CD8-positive, alpha-beta T cell (primary cell): ENCODE measurements at regions of chr17 and their contacts with region 1.

Region 1: DNA sequence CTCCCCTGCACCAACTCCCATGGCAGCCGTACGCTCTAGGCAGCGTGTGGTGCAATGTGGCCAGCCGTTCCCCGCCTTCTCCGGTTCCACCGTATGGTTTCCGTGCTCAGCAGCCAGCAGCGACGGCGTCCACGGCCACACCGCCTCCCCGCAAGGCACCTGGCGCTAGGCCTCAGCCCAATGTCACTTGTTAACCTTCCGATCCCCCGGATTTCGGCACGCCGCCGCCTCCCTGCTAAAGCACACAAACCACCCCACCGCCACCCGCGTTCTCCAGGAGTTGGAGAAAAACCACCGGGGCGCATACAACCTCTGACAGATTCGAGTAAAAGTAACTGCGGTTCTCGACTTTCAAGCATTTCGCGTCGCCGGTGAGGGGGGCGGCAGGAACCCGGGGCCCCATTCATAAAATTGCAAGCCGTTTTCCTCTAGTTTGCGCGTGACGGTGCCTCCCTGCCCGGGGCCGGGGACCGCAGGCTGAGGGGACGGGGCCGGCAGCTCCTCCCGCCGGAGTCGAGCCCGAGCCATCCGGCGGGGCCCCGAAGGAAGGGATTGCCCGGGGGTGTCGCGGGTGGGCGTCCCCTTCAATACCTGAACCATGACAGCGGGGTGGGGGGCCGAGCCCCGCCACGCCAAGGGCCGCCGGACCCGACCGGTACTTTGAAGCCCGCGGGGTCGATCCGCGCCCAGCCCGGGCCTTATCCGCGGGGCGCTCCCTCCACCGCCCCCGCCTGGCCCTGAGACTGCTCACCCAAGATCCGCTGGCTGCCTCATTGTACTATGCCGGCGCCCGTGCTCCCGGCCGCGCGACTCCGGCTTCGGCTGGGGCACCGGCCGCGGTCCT is at the start of gene TEX2:
- DNase-seq: peak; percentile 39 to 87 (median 67)
- ATAC-seq: peak; percentile 32
- H3K4me3 ChIP-seq: peak within 1 kb of the TSS; percentile 64 to 82
- H3K4me3 Mint-ChIP-seq: peak within 1 kb of the TSS; percentile 89
- H3K27ac ChIP-seq: peak within 1 kb of the TSS; percentile 67 to 74
- H3K27ac Mint-ChIP-seq: peak within 1 kb of the TSS; percentile 93
- H3K4me1 ChIP-seq: peaks cover 21% of the 10 kb centered on the region
- H3K4me1 Mint-ChIP-seq: peaks cover 37% of the 10 kb centered on the region
- H3K27me3 ChIP-seq: no peaks in the 10 kb centered on the region
- H3K27me3 Mint-ChIP-seq: no peaks in the 10 kb centered on the region
- CTCF ChIP-seq: no peak
- total RNA-seq, gene TEX2: 4.8 to 5.6 TPM

Region 2: DNA sequence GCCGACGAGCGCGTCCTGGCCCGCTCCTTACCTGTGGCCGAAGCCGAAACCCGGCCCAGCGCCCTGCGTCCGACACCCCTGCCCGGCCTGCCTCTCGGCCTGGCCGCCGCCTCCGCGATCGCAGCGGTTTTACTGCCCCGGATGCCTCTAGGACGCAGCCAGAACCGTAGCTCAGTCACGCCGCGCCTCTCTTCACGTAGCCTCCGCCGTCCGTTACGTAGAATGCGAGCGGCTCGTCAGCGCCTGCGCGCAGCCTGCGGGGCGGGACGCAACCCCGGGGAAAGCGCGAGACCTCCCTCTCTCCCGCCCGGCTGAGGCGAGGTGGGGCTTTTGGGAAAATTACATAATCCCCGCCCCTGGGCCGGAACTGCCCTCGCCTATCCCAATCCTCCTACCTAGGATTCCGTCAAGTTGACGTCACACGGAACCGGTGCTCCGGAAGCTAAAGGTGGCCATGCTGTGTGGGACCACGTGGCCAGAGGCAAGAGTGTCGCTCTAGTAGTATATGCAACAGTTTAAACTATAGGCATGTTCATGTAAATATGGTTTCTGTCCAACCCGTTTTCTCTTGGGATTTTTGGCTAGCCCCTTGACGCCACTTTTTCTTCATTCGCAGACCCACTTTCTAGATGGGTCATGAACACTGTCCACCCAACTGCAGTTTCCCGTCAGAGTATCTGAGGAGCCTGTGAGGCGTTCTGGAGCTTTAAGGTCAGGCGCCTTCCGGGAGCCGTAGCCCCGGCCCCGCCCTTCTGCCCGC is 489.1 kb before region 1 on chr17 and contains the start of gene CCDC47:
- CTCF ChIA-PET with region 1: no interaction called
- POLR2A ChIA-PET with region 1: no interaction called
- intact Hi-C with region 1: loop called in 1 of 2 experiments (anchors 2 kb)
- DNase-seq: peak; percentile 95 to 100 (median 97)
- ATAC-seq: peak; percentile 79
- H3K4me3 ChIP-seq: peak within 1 kb of the TSS; percentile 84 to 95
- H3K4me3 Mint-ChIP-seq: peak within 1 kb of the TSS; percentile 97
- H3K27ac ChIP-seq: peak within 1 kb of the TSS; percentile 86 to 97
- H3K27ac Mint-ChIP-seq: peak within 1 kb of the TSS; percentile 98
- H3K4me1 ChIP-seq: peaks cover 41% of the 10 kb centered on the region
- H3K4me1 Mint-ChIP-seq: peaks cover 60% of the 10 kb centered on the region
- H3K27me3 ChIP-seq: no peaks in the 10 kb centered on the region
- H3K27me3 Mint-ChIP-seq: no peaks in the 10 kb centered on the region
- CTCF ChIP-seq: no peak
- total RNA-seq, gene CCDC47: 33.1 to 34.6 TPM

Region 3: DNA sequence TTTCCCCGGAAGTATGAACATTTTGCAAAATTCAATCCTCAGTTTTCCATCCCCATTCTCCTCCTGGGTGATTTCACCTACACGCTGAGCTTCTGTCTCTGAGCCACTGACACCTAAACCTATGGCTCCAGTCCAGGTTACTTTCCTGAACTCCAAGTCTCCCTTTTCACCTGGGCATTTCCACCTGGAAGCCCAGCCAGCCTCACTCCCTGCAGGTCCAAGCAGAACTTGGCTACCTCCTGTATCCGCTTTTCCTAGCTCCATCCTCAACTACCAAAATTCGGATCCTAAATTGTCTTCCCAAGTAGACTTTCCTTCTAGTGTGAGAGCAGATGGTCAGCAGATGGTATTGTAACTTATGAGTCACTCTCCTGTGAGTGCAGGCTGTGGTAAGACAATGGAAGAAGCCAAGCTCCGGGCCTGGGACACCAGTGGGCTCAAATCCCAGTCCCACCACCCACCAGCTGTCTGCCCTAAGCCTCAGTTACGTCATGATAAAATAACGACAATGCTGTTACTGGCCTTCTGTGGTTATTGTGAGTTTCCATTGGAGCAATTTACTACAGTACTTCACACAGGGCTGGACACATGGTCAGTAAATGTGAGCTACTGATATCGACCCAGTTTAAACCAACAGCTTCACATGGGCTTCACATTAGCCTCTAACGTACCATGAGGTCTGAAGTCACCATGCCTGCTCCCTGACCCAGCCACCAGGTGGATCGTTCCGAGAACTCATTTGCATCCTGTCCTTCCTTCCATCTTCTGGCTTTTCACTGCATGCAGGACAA is 94.7 kb after region 1 on chr17:
- CTCF ChIA-PET with region 1: no interaction called
- POLR2A ChIA-PET with region 1: no interaction called
- intact Hi-C with region 1: no loop called
- DNase-seq: no peak
- ATAC-seq: no peak
- H3K4me3 ChIP-seq: no peak overlapping the region
- H3K4me3 Mint-ChIP-seq: no peak overlapping the region
- H3K27ac ChIP-seq: no peak overlapping the region
- H3K27ac Mint-ChIP-seq: peak overlapping the region; percentile 77
- H3K4me1 ChIP-seq: peaks cover 8% of the 10 kb centered on the region
- H3K4me1 Mint-ChIP-seq: peaks cover 21% of the 10 kb centered on the region
- H3K27me3 ChIP-seq: no peaks in the 10 kb centered on the region
- H3K27me3 Mint-ChIP-seq: no peaks in the 10 kb centered on the region
- CTCF ChIP-seq: no peak

Region 4: DNA sequence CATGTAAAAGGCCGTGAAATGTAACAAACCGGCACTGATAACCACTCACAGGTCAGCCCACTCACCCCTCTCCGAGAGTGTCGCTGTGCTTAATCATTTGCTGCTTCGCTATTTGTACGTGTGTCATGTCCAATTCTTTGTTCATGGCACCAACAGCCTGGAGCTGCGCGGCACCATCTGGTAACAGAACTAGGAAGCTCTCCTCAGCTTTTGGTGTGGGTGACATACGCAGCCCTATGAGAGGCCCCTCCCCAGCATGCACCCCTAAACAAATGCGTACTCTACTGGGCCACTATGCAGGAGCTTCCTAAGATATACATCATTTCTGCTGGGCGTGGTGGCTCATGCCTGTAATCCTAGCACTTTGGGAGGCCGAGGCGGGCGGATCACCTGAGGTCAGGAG is 130.4 kb after region 1 on chr17:
- CTCF ChIA-PET with region 1: no interaction called
- POLR2A ChIA-PET with region 1: no interaction called
- intact Hi-C with region 1: loop called in 1 of 2 experiments (anchors 2 kb)
- DNase-seq: peak in 7 of 9 experiments; percentile 28 to 77 (median 63)
- ATAC-seq: peak; percentile 76
- H3K4me3 ChIP-seq: peak overlapping the region; percentile 52 to 56
- H3K4me3 Mint-ChIP-seq: peak overlapping the region; percentile 87
- H3K27ac ChIP-seq: peak overlapping the region; percentile 60 to 78
- H3K27ac Mint-ChIP-seq: peak overlapping the region; percentile 96
- H3K4me1 ChIP-seq: peaks cover 79% of the 10 kb centered on the region
- H3K4me1 Mint-ChIP-seq: peaks cover 61% of the 10 kb centered on the region
- H3K27me3 ChIP-seq: no peaks in the 10 kb centered on the region
- H3K27me3 Mint-ChIP-seq: no peaks in the 10 kb centered on the region
- CTCF ChIP-seq: no peak

Region 5: GRCh38 chr17:64920026-64920418 is 657.4 kb after region 1 on chr17:
- CTCF ChIA-PET with region 1: no interaction called
- POLR2A ChIA-PET with region 1: no interaction called
- intact Hi-C with region 1: loop called in 1 of 2 experiments (anchors 10 kb)
- DNase-seq: peak in 3 of 9 experiments; percentile 23 to 47 (median 25)
- ATAC-seq: no peak
- H3K4me3 ChIP-seq: peak overlapping the region; percentile 59 to 73
- H3K4me3 Mint-ChIP-seq: peak overlapping the region; percentile 88
- H3K27ac ChIP-seq: peak overlapping the region; percentile 63 to 72
- H3K27ac Mint-ChIP-seq: peak overlapping the region; percentile 92
- H3K4me1 ChIP-seq: peaks cover 4% of the 10 kb centered on the region
- H3K4me1 Mint-ChIP-seq: peaks cover 3% of the 10 kb centered on the region
- H3K27me3 ChIP-seq: no peaks in the 10 kb centered on the region
- H3K27me3 Mint-ChIP-seq: no peaks in the 10 kb centered on the region
- CTCF ChIP-seq: no peak

Region 6: DNA sequence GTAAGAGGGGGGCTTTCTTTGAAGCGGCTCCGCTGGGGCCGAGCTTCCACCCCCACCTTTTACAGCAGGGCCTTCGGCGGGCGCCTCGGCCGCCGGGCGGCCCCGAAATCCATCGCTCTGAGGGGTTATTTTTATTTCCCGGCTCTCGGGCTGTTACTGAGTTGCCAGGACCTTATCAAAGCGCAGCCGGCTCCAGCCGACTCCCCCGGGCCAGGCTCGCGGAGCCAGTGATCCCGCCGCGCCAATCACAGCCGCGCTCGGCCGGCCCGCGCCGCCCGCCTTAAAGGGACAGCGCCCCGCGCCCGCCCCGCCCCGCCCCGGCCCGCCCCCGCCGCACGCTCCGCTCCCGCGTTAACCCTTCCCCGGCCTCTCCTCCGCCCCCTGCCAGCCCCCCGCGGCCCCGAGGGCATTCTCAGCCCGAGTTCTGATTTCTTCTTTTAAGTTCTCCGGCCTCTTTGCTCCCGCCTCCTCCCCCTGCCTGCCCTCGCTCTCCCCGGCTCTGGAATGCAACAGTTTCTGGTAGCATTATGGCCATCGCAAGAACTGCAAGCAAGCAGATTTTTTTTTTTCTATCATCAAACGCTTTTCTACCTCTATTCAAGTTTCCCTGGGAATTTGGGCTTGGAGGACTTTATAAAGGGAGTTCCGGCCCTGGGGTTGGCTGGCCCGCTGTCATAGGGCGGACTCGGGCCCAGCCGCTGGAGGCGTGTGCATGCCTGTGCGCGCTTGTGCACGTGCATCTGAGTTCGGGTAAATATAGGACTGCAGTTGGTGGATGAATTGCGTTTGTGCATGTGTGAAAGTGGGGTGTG is 1299.0 kb after region 1 on chr17 and contains the start of gene AXIN2:
- CTCF ChIA-PET with region 1: no interaction called
- POLR2A ChIA-PET with region 1: no interaction called
- intact Hi-C with region 1: loop called in 1 of 2 experiments (anchors 5 kb)
- DNase-seq: peak; percentile 72 to 92 (median 87)
- ATAC-seq: peak; percentile 79
- H3K4me3 ChIP-seq: peak within 1 kb of the TSS; percentile 59 to 62
- H3K4me3 Mint-ChIP-seq: peak within 1 kb of the TSS; percentile 85
- H3K27ac ChIP-seq: peak within 1 kb of the TSS; percentile 69 to 73
- H3K27ac Mint-ChIP-seq: peak within 1 kb of the TSS; percentile 90
- H3K4me1 ChIP-seq: peaks cover 42% of the 10 kb centered on the region
- H3K4me1 Mint-ChIP-seq: peaks cover 29% of the 10 kb centered on the region
- H3K27me3 ChIP-seq: no peaks in the 10 kb centered on the region
- H3K27me3 Mint-ChIP-seq: no peaks in the 10 kb centered on the region
- CTCF ChIP-seq: no peak
- total RNA-seq, gene AXIN2: 15.8 to 20.9 TPM